Mammary epithelial cell (primary cell): ENCODE measurements at regions of chr4 and their contacts with region 1.

Region 1: GRCh38 chr4:184851200-184851541 is 25.4 kb upstream of the ACSL1 start:
- DNase-seq: peak; percentile 9
- H3K4me3 ChIP-seq: no peak overlapping the region
- H3K27ac ChIP-seq: no peak overlapping the region
- H3K4me1 ChIP-seq: peaks cover 7% of the 10 kb centered on the region
- H3K27me3 ChIP-seq: no peaks in the 10 kb centered on the region
- CTCF ChIP-seq: no peak

Region 2: GRCh38 chr4:184873054-184873453 is 21.9 kb after region 1 on chr4:
- CTCF ChIA-PET with region 1: no interaction called
- dilution Hi-C with region 1: no loop called
- in situ Hi-C with region 1: no loop called
- intact Hi-C with region 1: no loop called
- DNase-seq: no peak
- H3K4me3 ChIP-seq: no peak overlapping the region
- H3K27ac ChIP-seq: no peak overlapping the region
- H3K4me1 ChIP-seq: no peaks in the 10 kb centered on the region
- H3K27me3 ChIP-seq: peaks cover 4% of the 10 kb centered on the region
- CTCF ChIP-seq: no peak

Region 3: DNA sequence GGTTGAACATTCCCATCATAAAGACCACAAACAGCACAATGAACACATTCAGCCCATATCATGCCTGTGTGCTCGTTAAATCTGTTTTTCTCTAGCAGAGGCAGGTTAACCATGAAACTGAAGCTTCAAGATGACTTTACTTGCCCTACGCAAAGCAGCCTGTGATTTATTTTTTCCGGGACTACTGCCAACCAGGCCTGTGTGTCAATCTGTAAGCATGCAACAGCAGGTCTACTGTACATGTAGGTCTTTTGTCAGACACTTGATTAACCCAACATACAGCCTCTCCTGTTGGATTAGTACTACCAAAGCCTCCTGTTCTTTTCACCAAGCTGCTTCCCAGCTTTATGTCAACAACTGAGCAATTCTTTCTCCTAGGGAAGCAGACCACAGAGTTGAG is 60.1 kb after region 1 on chr4:
- CTCF ChIA-PET with region 1: no interaction called
- dilution Hi-C with region 1: no loop called
- in situ Hi-C with region 1: no loop called
- intact Hi-C with region 1: loop called (anchors 5 kb)
- DNase-seq: peak; percentile 97
- H3K4me3 ChIP-seq: no peak overlapping the region
- H3K27ac ChIP-seq: peak overlapping the region; percentile 25
- H3K4me1 ChIP-seq: peaks cover 21% of the 10 kb centered on the region
- H3K27me3 ChIP-seq: no peaks in the 10 kb centered on the region
- CTCF ChIP-seq: no peak

Region 4: GRCh38 chr4:184983672-184984356 is 132.6 kb after region 1 on chr4:
- CTCF ChIA-PET with region 1: no interaction called
- dilution Hi-C with region 1: no loop called
- in situ Hi-C with region 1: no loop called
- intact Hi-C with region 1: no loop called
- DNase-seq: peak; percentile 59
- H3K4me3 ChIP-seq: no peak overlapping the region
- H3K27ac ChIP-seq: no peak overlapping the region
- H3K4me1 ChIP-seq: no peaks in the 10 kb centered on the region
- H3K27me3 ChIP-seq: peaks cover 2% of the 10 kb centered on the region
- CTCF ChIP-seq: peak; percentile 32 to 70